Endothelial cell of umbilical vein (primary cell): ENCODE measurements at regions of chr1 and their contacts with region 1.

Region 1: GRCh38 chr1:227219715-227220292 is 98.5 kb downstream of the CDC42BPA start:
- DNase-seq: no peak
- H3K4me3 ChIP-seq: no peak overlapping the region
- H3K27ac ChIP-seq: no peak overlapping the region
- H3K4me1 ChIP-seq: peaks cover 27% of the 10 kb centered on the region
- H3K27me3 ChIP-seq: no peaks in the 10 kb centered on the region
- CTCF ChIP-seq: no peak
- POLR2A ChIP-seq: no peak

Region 2: DNA sequence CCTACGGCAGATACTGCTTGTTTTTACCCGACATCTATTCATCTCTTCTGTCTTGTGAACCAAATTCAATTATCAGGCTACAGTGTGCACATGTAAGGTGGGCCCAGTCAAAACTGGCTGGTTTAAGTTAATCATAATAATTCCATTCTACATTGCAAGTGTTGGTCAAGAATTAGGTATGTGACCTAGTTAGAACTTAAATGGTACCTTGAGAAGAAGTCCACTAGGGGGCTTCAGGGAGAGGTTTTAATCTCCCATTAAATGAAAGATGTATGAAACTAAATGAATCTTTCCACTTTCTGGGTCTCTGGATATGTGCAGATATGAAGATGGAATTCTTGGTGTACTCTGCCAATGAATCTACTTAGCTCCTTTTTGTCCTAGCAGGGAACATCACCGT is 88.6 kb before region 1 on chr1:
- CTCF ChIA-PET with region 1: no interaction called
- POLR2A ChIA-PET with region 1: no interaction called
- dilution Hi-C with region 1: no loop called
- intact Hi-C with region 1: loop called (anchors 2 kb)
- DNase-seq: peak; percentile 51
- H3K4me3 ChIP-seq: no peak overlapping the region
- H3K27ac ChIP-seq: no peak overlapping the region
- H3K4me1 ChIP-seq: peaks cover 23% of the 10 kb centered on the region
- H3K27me3 ChIP-seq: no peaks in the 10 kb centered on the region
- CTCF ChIP-seq: peak; percentile 37 to 43
- POLR2A ChIP-seq: no peak